BJ (cell line): ENCODE measurements at regions of chr4 and their contacts with region 1.

Region 1: DNA sequence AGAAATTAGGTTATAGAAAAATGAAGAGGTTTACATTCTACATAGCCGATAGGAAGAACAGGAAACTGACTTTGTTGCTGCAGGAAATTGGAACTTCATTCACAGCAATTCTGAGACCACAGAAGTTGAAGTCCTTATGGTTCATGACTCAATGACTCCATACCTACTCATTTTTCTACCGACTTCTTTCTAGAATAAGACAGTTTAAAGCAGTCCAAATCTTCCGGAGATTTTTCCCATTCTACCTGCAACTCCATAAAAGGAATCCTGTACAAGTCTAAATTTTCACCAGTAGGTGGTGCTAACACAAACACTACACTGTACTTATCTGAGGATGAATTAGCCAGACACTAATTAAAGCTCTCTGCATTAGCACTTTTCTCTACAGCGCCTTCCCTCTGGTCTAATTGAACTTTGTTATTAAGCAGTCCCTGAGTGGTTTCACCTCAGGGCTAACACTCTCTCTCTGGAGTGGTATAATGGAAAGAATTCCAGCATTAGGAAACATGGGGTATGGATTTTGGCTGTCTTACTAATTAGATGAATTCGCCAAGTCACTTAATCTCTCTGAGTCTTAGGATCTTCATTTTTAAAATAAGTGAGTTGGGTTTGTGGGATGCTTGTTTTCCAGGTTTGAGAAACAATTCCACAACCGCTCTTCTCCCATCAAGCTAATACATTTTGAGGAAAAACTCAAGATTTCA is 167.9 kb downstream of the SMIM20 start:
- DNase-seq: no peak
- H3K4me3 ChIP-seq: no peak overlapping the region
- H3K27me3 ChIP-seq: peaks cover 29% of the 10 kb centered on the region
- CTCF ChIP-seq: peak; percentile 66

Region 2: GRCh38 chr4:25376754-25377571 is 705.0 kb before region 1 on chr4 and contains the start of gene ANAPC4:
- CTCF ChIA-PET with region 1: no interaction called
- POLR2A ChIA-PET with region 1: no interaction called
- DNase-seq: peak; percentile 45
- H3K4me3 ChIP-seq: peak within 1 kb of the TSS; percentile 96
- H3K27me3 ChIP-seq: no peaks in the 10 kb centered on the region
- CTCF ChIP-seq: no peak
- polyA plus RNA-seq, gene ANAPC4: 7.0 and 16.1 TPM in 2 replicates

Region 3: GRCh38 chr4:26061248-26061986 is 20.5 kb before region 1 on chr4:
- CTCF ChIA-PET with region 1: interaction called, 12 read pairs
- POLR2A ChIA-PET with region 1: no interaction called
- DNase-seq: no peak
- H3K4me3 ChIP-seq: no peak overlapping the region
- H3K27me3 ChIP-seq: no peaks in the 10 kb centered on the region
- CTCF ChIP-seq: peak; percentile 51

Region 4: GRCh38 chr4:26325191-26325590 is 243.2 kb after region 1 on chr4:
- CTCF ChIA-PET with region 1: interaction called, 15 read pairs
- POLR2A ChIA-PET with region 1: no interaction called
- DNase-seq: no peak
- H3K4me3 ChIP-seq: no peak overlapping the region
- H3K27me3 ChIP-seq: no peaks in the 10 kb centered on the region
- CTCF ChIP-seq: peak; percentile 55

Region 5: DNA sequence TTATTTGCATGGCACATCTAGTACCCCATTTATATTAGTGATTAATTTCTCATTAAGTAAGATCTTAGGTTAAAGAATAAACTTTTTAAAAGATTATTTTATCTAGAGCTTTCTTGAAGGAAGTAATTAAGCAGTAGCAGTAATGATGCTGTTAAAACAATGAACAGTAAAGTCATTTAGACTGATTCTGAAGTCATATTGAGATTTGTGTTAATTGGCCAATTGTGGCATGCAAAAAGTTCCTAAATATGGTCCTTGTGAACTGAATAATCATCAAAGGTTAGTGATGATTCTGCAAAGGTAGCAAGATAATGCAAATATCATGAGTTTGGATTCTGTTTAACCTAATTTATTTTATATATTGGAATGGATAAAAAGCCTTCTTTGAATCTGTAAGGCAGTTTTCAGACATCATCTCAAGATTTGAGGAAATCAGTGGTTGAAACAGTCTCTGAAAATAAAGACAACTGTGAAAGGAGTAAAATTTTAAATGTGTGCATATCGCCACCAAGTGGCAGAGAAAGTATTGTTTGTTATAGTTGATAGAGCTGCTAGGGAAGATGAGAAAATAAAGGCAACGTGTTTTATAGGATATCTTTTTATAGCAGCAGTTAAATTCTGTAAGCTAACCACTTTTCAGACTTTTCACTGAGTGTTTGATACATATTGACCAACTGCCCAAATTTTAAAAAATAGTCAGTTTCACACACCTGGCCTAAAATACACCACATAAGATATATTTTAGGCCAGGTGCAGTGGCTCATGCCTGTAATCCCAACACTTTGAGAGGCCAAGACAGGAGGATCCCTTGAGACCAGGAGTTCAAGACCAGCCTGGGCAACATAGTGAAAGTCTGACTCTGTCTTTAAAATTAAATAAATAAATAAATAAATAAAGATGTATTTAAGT is 328.7 kb after region 1 on chr4:
- CTCF ChIA-PET with region 1: interaction called, 15 read pairs
- POLR2A ChIA-PET with region 1: no interaction called
- DNase-seq: peak; percentile 15
- H3K4me3 ChIP-seq: no peak overlapping the region
- H3K27me3 ChIP-seq: no peaks in the 10 kb centered on the region
- CTCF ChIP-seq: peak; percentile 54